GM10248 (cell line): ENCODE measurements at regions of chr11 and their contacts with region 1.

Region 1: DNA sequence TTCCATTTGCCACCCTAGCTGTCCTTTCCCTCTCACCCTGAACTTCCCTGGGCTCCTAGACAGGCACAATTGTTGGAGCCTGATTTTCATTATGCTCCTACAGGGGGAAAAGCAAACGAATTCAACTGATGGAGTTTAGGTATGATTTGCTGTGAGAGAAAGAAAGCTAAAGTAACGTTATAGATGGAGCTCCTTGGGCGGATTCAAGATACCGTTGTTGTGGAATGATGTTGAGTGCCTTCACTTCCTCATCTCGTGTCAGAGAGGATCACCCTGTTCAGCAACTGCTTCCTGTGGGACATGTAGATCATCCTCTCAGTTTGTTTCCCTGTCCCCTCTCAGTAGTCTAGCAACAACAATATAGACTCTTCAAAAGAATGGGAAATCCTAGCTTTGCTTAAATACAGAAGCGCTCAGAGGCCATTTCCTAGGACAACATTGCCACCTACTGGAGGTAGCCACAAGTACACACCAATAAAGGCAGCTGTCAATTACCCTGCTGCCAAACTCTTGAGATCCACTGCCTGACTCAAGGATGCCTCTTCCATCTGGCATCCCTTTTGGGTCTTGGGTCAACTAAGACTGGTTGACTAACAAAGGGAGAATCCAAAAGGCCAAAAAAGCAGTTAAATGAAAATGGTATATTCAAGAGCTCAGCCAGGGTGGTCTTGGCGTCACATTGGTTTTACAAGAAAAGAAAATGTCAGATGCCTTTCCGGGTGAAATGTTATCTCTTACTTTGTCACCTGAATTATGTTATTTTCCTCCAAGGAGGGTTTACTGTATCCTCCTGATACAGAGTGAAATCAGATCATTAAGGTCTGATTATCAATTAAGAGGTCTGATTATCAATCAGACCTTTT is 13.5 kb upstream of the DTX4 start:
- DNase-seq: peak; percentile 64
- CTCF ChIP-seq: peak; percentile 71

Region 2: GRCh38 chr11:58629857-58630256 is 528.6 kb before region 1 on chr11:
- CTCF ChIA-PET with region 1: interaction called, 12 read pairs
- POLR2A ChIA-PET with region 1: no interaction called
- DNase-seq: peak; percentile 58
- CTCF ChIP-seq: peak; percentile 69

Region 3: GRCh38 chr11:58796333-58796732 is 362.1 kb before region 1 on chr11:
- CTCF ChIA-PET with region 1: no interaction called
- POLR2A ChIA-PET with region 1: no interaction called
- DNase-seq: no peak
- CTCF ChIP-seq: no peak

Region 4: GRCh38 chr11:58900479-58901420 is 257.7 kb before region 1 on chr11:
- CTCF ChIA-PET with region 1: interaction called, 10 read pairs
- POLR2A ChIA-PET with region 1: no interaction called
- DNase-seq: peak; percentile 54
- CTCF ChIP-seq: peak; percentile 53

Region 5: GRCh38 chr11:59053387-59053786 is 105.0 kb before region 1 on chr11:
- CTCF ChIA-PET with region 1: interaction called, 19 read pairs
- POLR2A ChIA-PET with region 1: no interaction called
- DNase-seq: no peak
- CTCF ChIP-seq: peak; percentile 70

Region 6: GRCh38 chr11:59106363-59107336 is 51.8 kb before region 1 on chr11 and contains the start of gene FAM111B:
- CTCF ChIA-PET with region 1: interaction called, 24 read pairs
- POLR2A ChIA-PET with region 1: no interaction called
- DNase-seq: peak; percentile 83
- CTCF ChIP-seq: peak; percentile 13

Region 7: GRCh38 chr11:59142530-59143507 is 15.6 kb before region 1 on chr11 and contains the start of gene FAM111A:
- CTCF ChIA-PET with region 1: interaction called, 104 read pairs
- POLR2A ChIA-PET with region 1: interaction called, 8 read pairs
- DNase-seq: peak; percentile 82
- CTCF ChIP-seq: peak; percentile 70

Region 8: GRCh38 chr11:59186130-59186594 is 27.7 kb after region 1 on chr11:
- CTCF ChIA-PET with region 1: interaction called, 962 read pairs
- POLR2A ChIA-PET with region 1: no interaction called
- DNase-seq: peak; percentile 79
- CTCF ChIP-seq: peak; percentile 59

Region 9: DNA sequence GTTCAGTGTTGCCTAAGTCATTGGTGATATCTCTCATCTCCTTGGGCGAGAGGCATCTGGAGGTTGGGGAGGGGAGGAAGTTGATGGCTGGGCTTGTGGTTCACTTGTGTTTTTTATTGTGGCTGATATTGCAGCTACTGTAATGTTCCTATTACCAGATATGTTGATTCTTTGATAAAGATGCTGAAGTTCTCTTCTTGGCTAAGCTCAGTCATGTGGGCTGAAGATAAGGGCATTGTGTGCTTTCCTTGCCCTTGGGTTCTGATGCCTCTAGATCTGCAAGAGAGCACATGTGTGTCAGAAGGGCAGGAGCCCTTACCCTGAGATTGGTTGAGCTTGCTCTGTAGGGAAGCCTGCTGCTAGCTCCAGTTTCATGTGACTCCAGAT is 608.8 kb after region 1 on chr11:
- CTCF ChIA-PET with region 1: no interaction called
- POLR2A ChIA-PET with region 1: no interaction called
- DNase-seq: no peak
- CTCF ChIP-seq: no peak